ENCODE measurements at regions of chr6 and their contacts with region 1.

Region 1: DNA sequence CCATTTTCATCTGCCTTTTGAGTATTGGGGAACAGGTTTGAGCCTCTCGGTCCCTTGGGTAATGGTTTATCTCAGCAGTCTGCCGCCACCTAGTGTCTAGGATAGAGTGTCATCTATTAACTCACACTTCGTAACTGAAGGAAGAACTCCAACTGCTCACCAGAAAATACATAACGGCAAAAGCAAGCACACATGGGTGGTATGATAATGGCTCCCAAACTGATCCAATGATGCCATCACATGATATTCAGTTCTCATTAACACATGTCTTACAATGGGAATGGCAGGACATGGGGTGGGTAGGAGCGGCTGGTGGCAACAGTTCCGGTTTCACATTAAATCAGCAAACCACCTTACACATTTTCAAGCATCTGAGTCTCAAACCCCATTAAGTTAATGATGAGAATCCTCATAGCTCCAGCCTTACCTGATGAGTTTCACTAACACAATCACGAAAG is 110.7 kb upstream of the PHACTR1 start:
- DNase-seq: peak; percentile 45
- ATAC-seq: peak; percentile 92
- H3K4me3 ChIP-seq: 0 out of 4 replicates have a peak overlapping the region, but pooled peaks of 1 of the 2 experiments have one; percentile 1
- H3K27ac ChIP-seq: peak overlapping the region; percentile 11; the same call in 1 of the 2 replicates
- H3K4me1 ChIP-seq: peaks cover 20% of the 10 kb centered on the region
- H3K27me3 ChIP-seq: no peaks in the 10 kb centered on the region
- CTCF ChIP-seq: peak; percentile 85

Region 2: DNA sequence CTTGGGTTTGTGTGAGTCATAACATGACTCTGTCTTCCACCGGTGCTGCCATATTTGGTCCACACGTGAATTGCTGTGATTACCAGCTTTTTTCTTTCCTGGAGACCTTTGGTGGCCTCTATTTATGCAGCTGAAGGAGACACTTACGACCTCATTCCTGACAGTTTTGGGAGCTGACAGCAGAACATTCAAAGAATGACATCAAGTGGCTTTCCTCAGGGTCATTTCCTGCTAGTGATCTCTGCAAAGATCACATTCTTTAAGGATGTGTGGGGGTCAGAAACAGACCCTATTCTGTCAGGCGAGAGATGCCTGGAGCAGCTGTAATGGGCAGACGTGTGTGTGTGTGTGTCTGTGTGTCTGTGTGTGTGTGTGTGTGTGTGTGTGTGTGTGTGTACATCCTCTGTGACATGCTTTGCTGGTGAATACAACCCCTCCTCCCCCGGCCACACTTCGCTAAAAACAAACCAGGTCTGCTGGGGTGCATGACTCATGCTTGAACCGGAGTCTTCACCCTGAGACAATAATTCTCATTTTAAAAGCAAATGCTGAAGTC is 952.8 kb before region 1 on chr6:
- CTCF ChIA-PET with region 1: no interaction called
- POLR2A ChIA-PET with region 1: no interaction called
- in situ Hi-C with region 1: no loop called
- intact Hi-C with region 1: loop called (anchors 5 kb)
- DNase-seq: no peak
- ATAC-seq: no peak
- H3K4me3 ChIP-seq: no peak overlapping the region
- H3K27ac ChIP-seq: no peak overlapping the region
- H3K4me1 ChIP-seq: no peaks in the 10 kb centered on the region
- H3K27me3 ChIP-seq: no peaks in the 10 kb centered on the region
- CTCF ChIP-seq: no peak

Region 3: GRCh38 chr6:12275087-12275486 is 330.8 kb before region 1 on chr6:
- CTCF ChIA-PET with region 1: no interaction called
- POLR2A ChIA-PET with region 1: interaction called, 11 read pairs
- in situ Hi-C with region 1: no loop called
- intact Hi-C with region 1: no loop called
- DNase-seq: no peak
- ATAC-seq: no peak
- H3K4me3 ChIP-seq: no peak overlapping the region
- H3K27ac ChIP-seq: 0 out of 2 replicates have a peak overlapping the region, but pooled peaks have one; percentile 41
- H3K4me1 ChIP-seq: peaks cover 14% of the 10 kb centered on the region; the same call in 1 of the 2 replicates
- H3K27me3 ChIP-seq: no peaks in the 10 kb centered on the region
- CTCF ChIP-seq: no peak

Region 4: DNA sequence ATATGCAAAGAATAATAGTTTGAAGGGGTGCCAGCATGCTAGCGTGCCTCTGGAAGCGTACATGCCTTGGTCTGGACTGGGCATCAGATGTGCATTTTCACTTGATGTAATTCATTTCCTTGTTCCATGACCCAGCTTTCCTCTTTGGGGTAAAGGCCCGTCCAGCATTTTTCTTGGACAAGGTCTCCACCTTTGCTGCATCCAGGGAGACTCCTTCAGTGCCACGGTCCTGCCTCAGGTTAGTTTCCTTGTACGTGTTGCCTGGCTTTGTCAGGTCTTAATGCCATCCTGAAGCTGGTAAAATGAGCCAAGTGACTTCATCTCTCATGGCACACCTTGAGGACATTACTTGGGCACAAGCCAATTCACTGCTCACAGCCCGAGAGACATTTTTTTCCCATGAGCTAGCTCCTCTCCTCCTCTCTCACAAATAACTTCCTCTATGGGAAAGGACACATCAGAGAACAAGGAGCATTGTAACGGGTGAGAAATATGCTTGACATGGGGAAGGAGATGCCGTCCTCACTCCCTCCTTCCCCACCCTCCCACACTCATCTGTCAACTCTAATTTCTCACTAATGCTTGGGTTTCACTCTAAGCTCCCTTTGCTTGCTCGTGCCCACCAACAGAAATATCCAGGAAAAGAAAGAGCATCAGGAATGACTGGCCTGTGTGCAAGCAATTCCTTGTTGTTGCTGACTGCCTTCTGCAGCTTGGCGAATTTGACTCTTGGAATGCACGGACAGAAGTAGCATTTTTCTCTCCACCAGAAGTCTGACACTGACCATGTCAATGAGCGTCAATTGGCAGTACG is 291.7 kb before region 1 on chr6:
- CTCF ChIA-PET with region 1: interaction called, 10 read pairs
- POLR2A ChIA-PET with region 1: no interaction called
- in situ Hi-C with region 1: no loop called
- intact Hi-C with region 1: loop called (anchors 5 kb)
- DNase-seq: peak; percentile 59
- ATAC-seq: peak; percentile 80
- H3K4me3 ChIP-seq: peak overlapping the region; percentile 16 to 45
- H3K27ac ChIP-seq: peak overlapping the region; percentile 90
- H3K4me1 ChIP-seq: peaks cover 27% of the 10 kb centered on the region
- H3K27me3 ChIP-seq: no peaks in the 10 kb centered on the region
- CTCF ChIP-seq: no peak

Region 5: GRCh38 chr6:12476484-12476883 is 129.4 kb before region 1 on chr6:
- CTCF ChIA-PET with region 1: no interaction called
- POLR2A ChIA-PET with region 1: no interaction called
- in situ Hi-C with region 1: no loop called
- intact Hi-C with region 1: no loop called
- DNase-seq: no peak
- ATAC-seq: no peak
- H3K4me3 ChIP-seq: no peak overlapping the region
- H3K27ac ChIP-seq: no peak overlapping the region; the same call in 1 of the 2 replicates
- H3K4me1 ChIP-seq: no peaks in the 10 kb centered on the region
- H3K27me3 ChIP-seq: no peaks in the 10 kb centered on the region
- CTCF ChIP-seq: no peak

Region 6: DNA sequence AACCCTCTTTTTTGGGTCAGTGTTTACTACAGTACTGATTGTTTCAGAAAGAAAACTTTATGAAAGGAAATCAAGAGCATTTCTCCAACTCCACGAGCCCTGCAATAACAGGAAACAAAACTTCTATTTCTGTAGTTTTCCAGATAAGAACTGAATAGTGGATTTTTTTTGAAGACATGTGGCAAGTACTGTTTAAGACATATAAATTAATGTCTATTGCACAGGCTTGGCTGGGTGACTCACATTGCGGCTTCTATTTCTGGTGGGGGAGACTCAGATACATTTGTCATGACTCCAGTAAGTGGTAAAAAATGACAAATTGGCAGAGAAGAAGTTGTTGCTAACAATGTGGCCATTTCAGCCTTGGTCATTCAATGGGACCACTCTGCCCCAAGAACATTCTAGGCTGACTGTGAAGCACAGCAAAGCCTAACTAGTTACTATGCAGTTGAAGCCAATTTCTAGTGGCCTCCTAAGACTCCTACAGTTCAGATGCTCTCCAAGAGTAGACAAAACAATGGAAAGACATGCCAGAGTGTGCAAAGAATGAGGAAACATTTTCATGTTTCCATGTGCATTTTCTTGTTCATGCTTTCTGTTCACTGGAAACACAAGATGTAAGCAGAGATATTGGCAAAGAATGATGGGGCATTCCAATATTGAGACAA is 114.9 kb before region 1 on chr6:
- CTCF ChIA-PET with region 1: no interaction called
- POLR2A ChIA-PET with region 1: interaction called, 3 read pairs
- in situ Hi-C with region 1: no loop called
- intact Hi-C with region 1: loop called (anchors 10 kb)
- DNase-seq: no peak
- ATAC-seq: no peak
- H3K4me3 ChIP-seq: no peak overlapping the region
- H3K27ac ChIP-seq: peak overlapping the region; percentile 58
- H3K4me1 ChIP-seq: no peaks in the 10 kb centered on the region; the same call in 1 of the 2 replicates
- H3K27me3 ChIP-seq: no peaks in the 10 kb centered on the region
- CTCF ChIP-seq: no peak

Region 7: GRCh38 chr6:12636336-12636735 is 30.4 kb after region 1 on chr6:
- CTCF ChIA-PET with region 1: no interaction called
- POLR2A ChIA-PET with region 1: no interaction called
- in situ Hi-C with region 1: no loop called
- intact Hi-C with region 1: no loop called
- DNase-seq: no peak
- ATAC-seq: no peak
- H3K4me3 ChIP-seq: no peak overlapping the region
- H3K27ac ChIP-seq: no peak overlapping the region
- H3K4me1 ChIP-seq: no peaks in the 10 kb centered on the region
- H3K27me3 ChIP-seq: 0 out of 2 replicates have a peak, but pooled peaks cover 2% of the 10 kb centered on the region
- CTCF ChIP-seq: peak; percentile 18; the same call in 1 of the 2 replicates

Region 8: GRCh38 chr6:12751694-12752325 is 145.9 kb after region 1 on chr6:
- CTCF ChIA-PET with region 1: no interaction called
- POLR2A ChIA-PET with region 1: no interaction called
- in situ Hi-C with region 1: no loop called
- intact Hi-C with region 1: no loop called
- DNase-seq: no peak
- ATAC-seq: no peak
- H3K4me3 ChIP-seq: no peak overlapping the region
- H3K27ac ChIP-seq: no peak overlapping the region
- H3K4me1 ChIP-seq: no peaks in the 10 kb centered on the region
- H3K27me3 ChIP-seq: peaks cover 8% of the 10 kb centered on the region
- CTCF ChIP-seq: no peak

Measured in Panc1 (cell line).